ENCODE measurements at regions of chr20 and their contacts with region 1.

Region 1: GRCh38 chr20:23161968-23162696 is 76.0 kb upstream of the CD93 start:
- DNase-seq: peak; percentile 100
- H3K4me3 Mint-ChIP-seq: no peak overlapping the region
- H3K27ac Mint-ChIP-seq: peak overlapping the region; percentile 92
- H3K4me1 Mint-ChIP-seq: peaks cover 64% of the 10 kb centered on the region
- H3K27me3 Mint-ChIP-seq: no peaks in the 10 kb centered on the region
- CTCF ChIP-seq: no peak

Region 2: DNA sequence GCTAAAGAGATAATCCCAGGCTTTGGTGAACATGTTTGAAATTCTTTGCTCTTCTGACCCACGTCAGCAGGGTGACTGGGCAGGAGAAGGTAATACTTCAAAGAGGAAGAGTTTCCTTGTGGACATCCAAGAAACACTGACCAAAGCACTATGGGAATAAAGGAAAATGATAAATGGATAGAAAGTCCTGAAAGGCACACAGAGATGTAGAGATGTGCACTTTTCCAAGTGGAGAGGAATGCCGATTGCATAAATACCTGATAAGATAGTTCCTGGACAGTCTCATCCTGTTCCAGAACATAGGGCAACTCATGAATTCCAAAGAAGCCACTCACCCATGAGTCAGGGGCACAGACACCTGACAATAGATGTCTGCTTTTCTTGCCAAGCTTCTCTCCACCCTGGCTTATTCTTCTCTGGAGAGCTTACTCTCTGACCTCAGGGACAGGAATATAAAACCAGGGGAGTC is 386.4 kb before region 1 on chr20:
- CTCF ChIA-PET with region 1: interaction called, 3 read pairs
- POLR2A ChIA-PET with region 1: interaction called, 10 read pairs
- intact Hi-C with region 1: no loop called
- DNase-seq: peak; percentile 88
- H3K4me3 Mint-ChIP-seq: peak overlapping the region; percentile 45
- H3K27ac Mint-ChIP-seq: peak overlapping the region; percentile 72
- H3K4me1 Mint-ChIP-seq: peaks cover 59% of the 10 kb centered on the region
- H3K27me3 Mint-ChIP-seq: no peaks in the 10 kb centered on the region
- CTCF ChIP-seq: no peak

Region 3: DNA sequence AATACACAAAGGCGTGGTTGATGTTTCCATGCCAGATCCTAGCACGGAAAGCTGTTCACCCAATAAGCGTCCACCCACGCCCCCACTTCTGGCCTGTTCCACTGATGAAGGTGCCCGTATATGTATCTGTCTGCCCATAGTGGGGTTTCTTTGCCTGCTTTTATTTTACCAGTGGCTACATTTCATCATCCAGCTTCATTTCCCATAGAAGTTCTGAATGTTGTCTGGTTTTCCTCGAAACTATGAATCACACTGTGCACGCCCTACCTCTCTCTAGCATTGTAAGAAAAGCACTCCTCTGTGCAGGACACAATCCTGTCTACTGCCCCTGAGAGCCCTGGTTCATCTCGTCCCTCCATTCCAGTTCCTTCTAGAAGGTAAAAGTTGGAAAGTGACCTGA is 67.2 kb before region 1 on chr20:
- CTCF ChIA-PET with region 1: interaction called, 9 read pairs
- POLR2A ChIA-PET with region 1: interaction called, 58 read pairs
- intact Hi-C with region 1: no loop called
- DNase-seq: peak; percentile 92
- H3K4me3 Mint-ChIP-seq: peak overlapping the region; percentile 53
- H3K27ac Mint-ChIP-seq: peak overlapping the region; percentile 84
- H3K4me1 Mint-ChIP-seq: peaks cover 38% of the 10 kb centered on the region
- H3K27me3 Mint-ChIP-seq: no peaks in the 10 kb centered on the region
- CTCF ChIP-seq: no peak

Region 4: GRCh38 chr20:23132930-23133559 is 29.1 kb before region 1 on chr20:
- CTCF ChIA-PET with region 1: interaction called, 11 read pairs
- POLR2A ChIA-PET with region 1: interaction called, 555 read pairs
- intact Hi-C with region 1: no loop called
- DNase-seq: no peak
- H3K4me3 Mint-ChIP-seq: no peak overlapping the region
- H3K27ac Mint-ChIP-seq: no peak overlapping the region
- H3K4me1 Mint-ChIP-seq: peaks cover 27% of the 10 kb centered on the region
- H3K27me3 Mint-ChIP-seq: no peaks in the 10 kb centered on the region
- CTCF ChIP-seq: no peak

Region 5: GRCh38 chr20:23147964-23148730 is 14.0 kb before region 1 on chr20:
- CTCF ChIA-PET with region 1: interaction called, 66 read pairs
- POLR2A ChIA-PET with region 1: interaction called, 555 read pairs
- intact Hi-C with region 1: loop called (anchors 2 kb)
- DNase-seq: peak; percentile 80
- H3K4me3 Mint-ChIP-seq: peak overlapping the region; percentile 28
- H3K27ac Mint-ChIP-seq: peak overlapping the region; percentile 89
- H3K4me1 Mint-ChIP-seq: peaks cover 55% of the 10 kb centered on the region
- H3K27me3 Mint-ChIP-seq: no peaks in the 10 kb centered on the region
- CTCF ChIP-seq: no peak

Region 6: GRCh38 chr20:23702021-23702420 is 539.9 kb after region 1 on chr20:
- CTCF ChIA-PET with region 1: no interaction called
- POLR2A ChIA-PET with region 1: no interaction called
- intact Hi-C with region 1: no loop called
- DNase-seq: no peak
- H3K4me3 Mint-ChIP-seq: no peak overlapping the region
- H3K27ac Mint-ChIP-seq: no peak overlapping the region
- H3K4me1 Mint-ChIP-seq: peaks cover 6% of the 10 kb centered on the region
- H3K27me3 Mint-ChIP-seq: peaks cover 41% of the 10 kb centered on the region
- CTCF ChIP-seq: no peak

Measured in MCF 10A (cell line).